Left ventricle myocardium superior (tissue), 1 donor: ENCODE measurements at regions of chr3 and their contacts with region 1.

Region 1: DNA sequence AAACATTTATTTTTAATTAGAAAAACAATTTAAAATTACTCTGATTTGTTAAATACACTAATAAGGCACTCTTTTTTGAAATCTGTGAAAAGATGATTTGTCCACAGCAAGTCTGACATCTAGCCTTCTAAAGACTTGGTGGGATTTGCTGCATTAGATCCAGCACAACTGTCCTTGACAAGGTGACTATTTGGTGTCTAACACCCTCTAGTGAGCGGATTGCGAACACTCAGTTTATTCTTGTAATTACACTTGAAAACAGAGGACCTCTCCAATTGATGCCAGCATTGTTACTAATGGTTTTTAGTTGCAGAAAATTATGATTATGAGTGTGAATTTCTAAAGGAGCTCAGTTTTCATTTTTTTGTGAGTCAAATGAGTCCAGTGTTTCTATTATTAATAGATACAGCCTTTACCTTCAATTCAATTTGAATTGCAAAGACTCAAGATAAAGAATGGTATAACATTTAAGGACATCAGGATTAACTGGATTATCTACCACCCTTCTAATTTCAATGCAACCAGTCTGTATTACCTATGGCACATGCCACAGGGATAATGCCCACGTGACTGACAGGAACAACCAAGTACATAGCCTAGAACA is 29.7 kb upstream of the STRIT1 start:
- DNase-seq: no peak
- ATAC-seq: peak; percentile 76

Region 2: DNA sequence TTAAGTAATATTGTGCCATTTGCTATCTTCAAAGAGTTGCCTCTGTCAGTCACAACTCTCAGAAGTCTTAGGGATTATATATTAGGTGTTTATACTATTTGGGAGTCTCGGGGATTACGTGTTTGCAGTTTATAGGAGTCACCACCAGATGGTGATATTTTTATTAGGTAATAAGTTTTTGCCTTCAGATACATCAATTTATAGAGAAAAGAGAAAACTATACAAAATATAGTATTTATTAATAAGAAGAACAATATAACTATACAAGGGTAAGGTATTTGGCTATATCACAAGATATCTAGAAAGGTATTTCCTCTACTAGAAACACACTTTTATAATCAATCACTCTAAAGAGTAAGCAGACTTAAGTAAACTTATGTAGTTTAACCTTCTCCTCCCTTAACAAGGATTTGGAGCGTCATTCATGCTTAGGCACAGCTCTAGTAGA is 988.2 kb before region 1 on chr3:
- intact Hi-C with region 1: loop called (anchors 5 kb)
- DNase-seq: no peak
- ATAC-seq: no peak

Region 3: DNA sequence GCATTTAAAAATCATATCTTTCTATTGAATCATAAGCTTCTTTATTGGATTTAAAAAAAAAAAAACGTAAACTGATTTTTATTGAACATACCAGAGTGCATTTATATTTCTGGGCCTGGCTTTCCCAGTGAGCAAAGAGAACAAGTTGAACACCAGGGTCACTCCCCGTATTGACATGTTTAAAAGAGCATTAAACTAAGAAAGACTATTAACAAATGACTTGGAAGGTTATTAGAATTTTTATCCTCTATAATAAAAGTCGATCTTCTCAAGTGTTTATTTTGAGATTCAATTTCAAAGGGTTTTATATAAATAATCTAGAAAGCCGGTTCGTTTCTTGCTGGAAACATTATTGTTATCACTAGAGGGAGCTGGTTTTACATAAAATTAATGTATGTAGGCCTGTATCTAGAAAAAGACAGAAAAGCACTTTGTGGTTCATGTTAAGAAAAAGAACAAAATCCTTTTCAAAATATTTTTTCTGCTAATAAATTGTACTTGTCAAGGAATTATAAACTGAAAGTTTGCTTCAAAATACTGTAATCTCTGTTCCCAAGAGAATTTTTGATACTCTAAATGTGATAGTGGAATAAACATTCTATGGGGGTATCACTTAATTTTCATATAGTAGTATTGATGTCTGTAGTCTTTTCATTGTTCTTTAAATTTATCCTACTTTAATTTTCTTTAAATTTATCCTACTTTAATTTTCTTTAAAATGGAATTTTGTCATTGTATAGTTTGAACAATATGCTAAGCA is 564.9 kb before region 1 on chr3:
- intact Hi-C with region 1: loop called (anchors 10 kb)
- DNase-seq: no peak
- ATAC-seq: no peak

Region 4: GRCh38 chr3:155504682-155505081 is 181.5 kb after region 1 on chr3:
- intact Hi-C with region 1: no loop called
- DNase-seq: no peak
- ATAC-seq: no peak

Region 5: DNA sequence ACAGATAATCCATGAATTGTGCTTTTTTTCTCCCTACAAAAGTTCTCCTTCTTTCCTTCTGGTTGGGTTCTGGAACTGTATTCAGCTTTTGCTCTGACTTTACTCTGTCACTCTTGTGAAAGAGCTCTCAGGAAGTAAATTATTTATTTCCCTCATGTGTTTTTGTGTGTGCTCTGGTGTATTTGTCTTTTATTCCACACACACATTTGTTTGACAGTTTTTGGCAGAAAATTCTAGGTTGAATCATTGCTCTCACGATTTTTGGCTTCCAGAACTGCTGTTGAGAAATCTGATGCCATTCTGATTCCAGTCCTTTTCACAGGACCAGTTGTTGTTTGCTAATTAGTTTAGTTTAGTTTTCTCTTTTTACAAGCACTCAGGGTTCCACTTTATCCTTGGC is 248.9 kb after region 1 on chr3:
- intact Hi-C with region 1: no loop called
- DNase-seq: no peak
- ATAC-seq: peak; percentile 74